ENCODE measurements at regions of chr17 and their contacts with region 1.

Region 1: DNA sequence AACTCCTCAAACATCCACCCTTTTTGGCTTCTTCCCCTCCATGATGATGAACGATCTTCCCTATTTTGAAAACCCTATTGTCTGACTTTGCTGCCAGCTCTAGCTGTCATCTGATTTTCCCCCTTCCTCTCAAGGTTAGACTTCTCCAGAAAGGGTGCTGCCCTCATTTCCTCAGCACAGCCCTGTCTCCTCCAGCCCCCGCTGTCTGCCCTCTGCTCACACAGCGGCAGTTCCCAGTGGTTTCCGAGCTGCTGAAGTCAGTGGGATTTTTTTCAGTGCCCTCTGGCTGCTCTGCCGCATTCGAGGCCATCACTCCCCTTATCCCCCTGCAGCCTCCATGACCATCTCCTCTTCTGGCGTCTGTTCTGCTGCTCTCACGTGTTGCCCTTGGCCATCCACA is 26.6 kb upstream of the C17orf107 start:
- DNase-seq: no peak
- H3K4me3 ChIP-seq: no peak overlapping the region
- H3K27ac ChIP-seq: no peak overlapping the region
- H3K4me1 ChIP-seq: no peaks in the 10 kb centered on the region
- H3K27me3 ChIP-seq: no peaks in the 10 kb centered on the region
- CTCF ChIP-seq: no peak
- EP300 ChIP-seq: no peak
- POLR2A ChIP-seq: no peak

Region 2: DNA sequence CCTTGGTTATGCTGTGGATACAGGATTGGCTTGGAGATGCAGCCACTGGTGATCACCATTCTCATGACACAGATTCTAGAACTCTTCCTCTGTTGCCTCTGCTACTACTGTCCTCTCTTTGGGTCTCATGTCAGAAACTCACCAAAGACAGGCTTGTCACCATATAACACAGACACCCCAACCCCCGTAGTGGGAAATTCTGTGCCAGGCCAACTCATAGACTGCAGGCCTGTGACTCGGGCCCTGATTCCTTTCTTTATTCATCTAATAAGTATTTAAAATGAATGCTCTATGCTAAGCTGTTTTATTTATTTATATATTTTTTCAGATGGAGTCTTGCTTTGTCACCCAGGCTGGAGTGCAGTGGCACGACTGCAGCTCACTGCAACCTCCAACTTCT is 720.3 kb before region 1 on chr17:
- intact Hi-C with region 1: no loop called
- DNase-seq: no peak
- H3K4me3 ChIP-seq: no peak overlapping the region
- H3K27ac ChIP-seq: no peak overlapping the region
- H3K4me1 ChIP-seq: no peaks in the 10 kb centered on the region
- H3K27me3 ChIP-seq: no peaks in the 10 kb centered on the region
- CTCF ChIP-seq: no peak
- EP300 ChIP-seq: no peak
- POLR2A ChIP-seq: no peak

Region 3: GRCh38 chr17:4815043-4815675 is 57.6 kb before region 1 on chr17:
- intact Hi-C with region 1: loop called (anchors 10 kb)
- DNase-seq: no peak
- H3K4me3 ChIP-seq: no peak overlapping the region
- H3K27ac ChIP-seq: no peak overlapping the region
- H3K4me1 ChIP-seq: no peaks in the 10 kb centered on the region
- H3K27me3 ChIP-seq: no peaks in the 10 kb centered on the region
- CTCF ChIP-seq: peak in 1 of 7 experiments; percentile 15
- EP300 ChIP-seq: no peak
- POLR2A ChIP-seq: no peak